CD4-positive, alpha-beta T cell (primary cell): ENCODE measurements at regions of chr1 and their contacts with region 1.

Region 1: DNA sequence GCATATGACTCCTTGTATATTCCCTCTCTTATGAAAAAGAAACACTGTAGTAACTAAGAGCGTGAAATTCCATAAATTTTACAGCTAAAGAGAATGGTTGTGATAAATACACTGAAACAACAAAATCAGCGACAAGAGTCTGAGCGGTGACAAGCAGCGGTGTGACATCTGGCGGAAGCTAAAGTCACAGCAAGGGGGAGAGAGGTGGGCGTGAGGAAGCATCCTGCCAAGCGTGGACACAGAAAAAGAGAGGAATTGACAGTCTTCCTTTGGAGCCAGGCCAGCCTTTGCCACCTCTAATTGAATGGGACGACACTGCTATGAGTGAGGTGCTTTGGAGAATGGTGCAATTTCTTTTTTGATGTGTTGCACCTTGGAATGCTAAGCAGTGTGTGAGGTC is 25.9 kb downstream of the PSMB2 start:
- DNase-seq: no peak
- ATAC-seq: no peak
- H3K4me3 ChIP-seq: no peak overlapping the region
- H3K4me3 Mint-ChIP-seq: no peak overlapping the region
- H3K27ac ChIP-seq: no peak overlapping the region
- H3K27ac Mint-ChIP-seq: no peak overlapping the region
- H3K4me1 ChIP-seq: peaks cover 2% of the 10 kb centered on the region
- H3K4me1 Mint-ChIP-seq: peaks cover 15% of the 10 kb centered on the region
- H3K27me3 ChIP-seq: no peaks in the 10 kb centered on the region
- H3K27me3 Mint-ChIP-seq: no peaks in the 10 kb centered on the region
- CTCF ChIP-seq: no peak

Region 2: DNA sequence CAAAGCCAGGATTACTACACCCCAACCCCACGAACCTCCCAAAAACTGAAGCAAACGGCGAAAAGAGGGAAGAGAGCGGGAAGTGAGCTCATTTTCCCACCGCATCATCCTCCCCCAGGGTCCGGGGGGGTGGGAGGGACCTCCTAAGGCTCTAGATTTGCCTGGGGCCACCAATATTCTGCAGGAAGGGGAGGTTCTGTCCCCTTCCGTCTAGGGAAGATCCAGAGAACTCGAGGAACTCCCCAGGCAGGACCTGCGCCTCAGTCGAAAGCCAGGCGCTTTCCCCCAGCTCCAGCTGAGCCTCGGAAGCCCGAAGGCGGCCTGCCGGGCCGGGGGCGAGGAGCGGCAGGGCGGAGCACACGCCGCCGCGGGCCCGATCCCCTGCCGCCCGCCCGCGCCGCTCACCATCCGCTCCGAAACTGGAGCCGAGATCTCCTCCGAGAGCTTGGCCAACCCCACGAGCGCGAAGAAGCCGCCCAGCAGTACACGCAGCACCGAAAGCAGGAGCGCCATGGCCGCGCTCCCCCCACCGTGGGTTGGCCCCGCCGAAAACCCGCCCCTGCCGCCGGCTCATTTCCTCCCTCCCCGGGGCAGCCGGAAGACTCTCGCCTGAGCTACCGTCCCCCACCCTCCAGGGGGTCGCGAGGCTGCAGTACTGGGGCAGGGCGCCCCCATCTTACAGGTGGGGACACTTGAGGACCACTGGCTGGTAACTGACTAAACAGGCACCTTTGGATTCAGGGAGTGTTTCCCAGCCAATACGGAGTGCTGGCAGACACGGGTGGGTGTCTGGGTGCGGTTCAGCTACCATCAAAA is 630.4 kb before region 1 on chr1 and contains the start of gene TMEM35B:
- CTCF ChIA-PET with region 1: no interaction called
- POLR2A ChIA-PET with region 1: no interaction called
- intact Hi-C with region 1: no loop called
- DNase-seq: peak; percentile 64 to 88 (median 78)
- ATAC-seq: peak; percentile 97
- H3K4me3 ChIP-seq: peak within 1 kb of the TSS; percentile 65
- H3K4me3 Mint-ChIP-seq: peak within 1 kb of the TSS; percentile 97
- H3K27ac ChIP-seq: peak within 1 kb of the TSS; percentile 76 to 77
- H3K27ac Mint-ChIP-seq: peak within 1 kb of the TSS; percentile 87
- H3K4me1 ChIP-seq: peaks cover 41% of the 10 kb centered on the region
- H3K4me1 Mint-ChIP-seq: peaks cover 39% of the 10 kb centered on the region
- H3K27me3 ChIP-seq: no peaks in the 10 kb centered on the region
- H3K27me3 Mint-ChIP-seq: no peaks in the 10 kb centered on the region
- CTCF ChIP-seq: peak; percentile 33
- total RNA-seq, gene TMEM35B: 0.85 to 2.3 TPM

Region 3: DNA sequence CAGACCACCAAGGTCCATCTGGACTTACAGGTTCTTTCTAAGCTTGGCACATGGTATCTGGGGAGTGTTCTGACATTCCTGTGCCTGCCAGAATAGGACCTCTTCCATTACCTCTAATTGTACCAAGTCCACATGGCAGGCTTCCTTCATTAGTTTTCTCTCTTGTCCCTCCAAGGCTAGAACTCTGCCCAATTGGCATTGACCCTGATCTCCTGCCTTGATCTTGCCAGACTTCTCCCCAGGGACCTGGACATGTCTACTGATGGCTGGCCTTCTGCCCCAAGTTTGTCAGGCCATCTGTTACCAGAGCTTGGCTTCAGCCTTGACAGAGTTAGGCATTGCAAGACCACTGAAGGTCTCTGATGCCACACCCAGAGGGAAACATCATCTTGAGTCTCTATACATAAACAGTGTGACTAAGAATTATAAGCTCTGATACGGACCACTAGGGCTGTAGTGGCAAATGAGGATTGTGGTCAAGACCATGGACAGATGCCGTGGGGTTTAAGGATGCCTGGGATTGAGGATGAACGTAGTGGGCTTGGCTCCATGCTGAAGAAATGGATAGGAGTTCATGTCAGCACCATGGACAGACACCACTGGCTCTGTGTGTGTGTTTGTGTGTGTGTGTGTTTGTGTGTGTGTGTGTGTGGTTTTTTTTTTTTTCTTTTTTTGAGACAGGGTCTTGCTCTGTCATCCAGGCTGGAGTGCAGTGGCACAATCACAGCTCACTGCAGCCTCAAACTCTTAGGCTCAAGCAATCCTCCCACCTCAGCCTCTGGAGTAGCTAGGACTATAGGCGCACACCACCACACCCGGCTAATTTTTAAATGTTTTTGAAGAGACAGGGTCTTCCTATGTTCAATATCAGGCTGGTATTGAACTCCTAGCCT is 45.4 kb after region 1 on chr1:
- CTCF ChIA-PET with region 1: no interaction called
- POLR2A ChIA-PET with region 1: no interaction called
- intact Hi-C with region 1: loop called in 1 of 2 experiments (anchors 5 kb)
- DNase-seq: no peak
- ATAC-seq: no peak
- H3K4me3 ChIP-seq: no peak overlapping the region
- H3K4me3 Mint-ChIP-seq: no peak overlapping the region
- H3K27ac ChIP-seq: no peak overlapping the region
- H3K27ac Mint-ChIP-seq: no peak overlapping the region
- H3K4me1 ChIP-seq: no peaks in the 10 kb centered on the region
- H3K4me1 Mint-ChIP-seq: no peaks in the 10 kb centered on the region
- H3K27me3 ChIP-seq: no peaks in the 10 kb centered on the region
- H3K27me3 Mint-ChIP-seq: no peaks in the 10 kb centered on the region
- CTCF ChIP-seq: no peak